Activated naive CD8-positive, alpha-beta T cell treated with anti-CD3 and anti-CD28 coated beads, Interleukin-2, amount 10 ng/mL, durations not matched to agents 7 days and 5 days (primary cell): ENCODE measurements at regions of chr7 and their contacts with region 1.

Region 1: DNA sequence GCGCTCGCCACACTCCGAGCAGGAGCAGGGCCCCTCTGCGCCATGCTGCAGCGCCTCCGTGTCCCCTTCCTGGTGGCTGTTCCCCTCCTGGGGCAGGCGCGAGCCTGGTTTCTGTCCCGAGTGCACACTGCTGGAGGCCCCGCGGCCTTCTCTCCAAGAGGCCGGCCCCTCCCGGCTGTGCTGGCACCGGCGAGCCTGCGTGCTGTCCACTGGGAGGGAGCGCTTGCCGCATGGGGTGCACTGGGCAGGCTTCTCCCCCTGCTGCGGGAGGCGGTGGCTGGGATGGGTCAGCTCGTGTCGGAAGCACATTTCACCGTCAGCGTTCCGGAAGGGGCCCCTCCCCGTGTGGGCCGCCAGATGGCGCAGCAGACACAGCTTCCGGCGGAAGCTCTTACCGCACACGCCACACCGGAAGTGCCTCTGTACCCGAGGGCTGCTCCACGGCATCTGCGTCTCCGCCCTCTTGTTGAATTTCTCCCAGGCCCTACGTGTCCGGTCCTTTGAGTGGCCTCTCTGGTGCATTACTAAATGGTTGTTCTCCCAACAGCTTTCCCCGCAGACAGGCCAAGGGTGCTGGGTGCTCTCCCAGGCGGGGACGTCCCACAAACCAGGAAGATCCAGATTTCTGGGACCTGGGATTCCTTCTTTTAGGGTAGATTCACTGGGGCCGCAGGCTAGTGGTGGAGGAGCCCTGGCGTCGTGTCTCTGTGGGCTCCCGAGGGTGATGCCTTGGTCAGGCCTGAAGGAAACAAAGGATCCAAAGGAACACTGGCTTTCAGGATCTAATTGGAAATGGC is 18.7 kb downstream of the ZNF786 start:
- DNase-seq: peak; percentile 55
- ATAC-seq: peak; percentile 54
- H3K4me3 Mint-ChIP-seq: peak overlapping the region; percentile 37
- H3K27ac Mint-ChIP-seq: no peak overlapping the region
- H3K4me1 Mint-ChIP-seq: peaks cover 7% of the 10 kb centered on the region
- H3K27me3 Mint-ChIP-seq: no peaks in the 10 kb centered on the region

Region 2: GRCh38 chr7:149005241-149006050 is 66.4 kb before region 1 on chr7:
- POLR2A ChIA-PET with region 1: interaction called, 15 read pairs
- DNase-seq: peak; percentile 83
- ATAC-seq: peak; percentile 88
- H3K4me3 Mint-ChIP-seq: no peak overlapping the region
- H3K27ac Mint-ChIP-seq: no peak overlapping the region
- H3K4me1 Mint-ChIP-seq: peaks cover 2% of the 10 kb centered on the region
- H3K27me3 Mint-ChIP-seq: no peaks in the 10 kb centered on the region